RWPE1 (cell line): ENCODE measurements at regions of chr9 and their contacts with region 1.

Region 1: DNA sequence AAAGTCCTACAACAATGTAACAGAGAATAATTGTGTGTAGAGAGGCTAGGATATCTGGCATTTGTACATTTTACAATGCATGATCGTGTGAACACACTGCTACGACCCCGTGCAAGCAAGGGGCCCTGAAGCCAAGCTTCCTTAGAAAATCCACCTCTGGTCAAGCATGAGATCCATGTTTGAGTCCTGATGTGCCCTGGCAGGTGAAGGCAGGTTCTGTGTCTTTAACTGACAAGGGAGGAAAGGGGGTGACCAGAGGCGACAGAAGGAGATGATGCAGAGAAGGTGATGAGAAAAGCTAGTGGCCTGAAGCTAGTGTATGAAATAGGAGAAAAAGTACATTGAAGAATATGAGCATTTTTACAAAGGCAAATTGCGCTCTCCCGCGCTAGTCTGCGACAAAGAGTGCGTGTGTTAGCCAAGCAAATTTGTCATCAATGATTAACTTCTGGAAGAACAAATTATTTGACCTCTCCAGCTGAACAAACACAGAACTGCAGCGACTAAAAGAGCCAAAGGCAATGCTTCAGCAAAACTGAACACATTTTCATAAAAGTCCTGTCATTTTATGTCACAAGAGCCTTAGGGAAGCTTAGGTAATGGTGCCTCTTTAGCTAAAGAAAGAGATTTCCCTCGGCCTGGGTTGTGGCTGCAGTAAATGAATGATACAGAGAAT is 101.7 kb upstream of the DAPK1 start:
- DNase-seq: no peak
- H3K27ac ChIP-seq: no peak overlapping the region
- CTCF ChIP-seq: no peak

Region 2: DNA sequence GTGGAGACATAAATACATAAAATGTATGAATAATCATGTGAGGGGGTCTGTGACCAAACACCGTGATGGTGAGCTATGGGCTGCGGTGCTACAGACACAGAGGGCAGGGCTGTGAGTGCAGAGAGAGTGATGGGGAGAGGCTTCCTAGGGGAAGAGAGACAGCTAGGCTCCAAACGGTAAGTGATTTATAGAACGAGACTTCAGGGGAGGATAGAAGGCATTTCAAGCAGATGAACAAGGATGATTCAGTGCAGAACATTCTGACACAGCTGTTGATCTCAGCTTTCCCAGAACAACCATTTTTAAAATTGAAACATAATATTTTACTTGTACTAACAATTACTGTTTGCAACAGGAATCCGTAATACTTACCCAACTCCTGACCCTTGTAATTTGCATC is 549.3 kb before region 1 on chr9:
- CTCF ChIA-PET with region 1: interaction called, 15 read pairs
- POLR2A ChIA-PET with region 1: no interaction called
- DNase-seq: no peak
- H3K27ac ChIP-seq: no peak overlapping the region
- CTCF ChIP-seq: no peak

Region 3: DNA sequence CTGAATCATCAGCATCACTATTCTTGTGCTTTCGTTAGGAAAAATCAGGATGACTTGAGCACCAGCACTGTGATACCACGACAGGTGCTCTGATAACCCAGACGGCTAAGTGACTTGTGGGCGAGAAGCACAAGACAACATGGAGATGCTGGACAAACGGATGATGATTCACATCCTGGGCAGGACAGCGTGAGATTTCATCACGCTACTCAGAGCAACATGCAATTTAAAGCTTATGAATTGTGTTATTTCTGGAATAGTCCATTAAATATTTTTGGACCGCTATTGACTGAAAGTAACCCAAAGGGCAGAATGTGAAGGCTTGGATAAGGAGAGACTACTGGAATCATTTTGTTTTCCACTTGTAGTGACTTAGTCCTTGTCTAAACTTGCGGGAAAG is 13.0 kb before region 1 on chr9:
- CTCF ChIA-PET with region 1: no interaction called
- POLR2A ChIA-PET with region 1: no interaction called
- DNase-seq: peak; percentile 31
- H3K27ac ChIP-seq: peak overlapping the region; percentile 97
- CTCF ChIP-seq: no peak

Region 4: DNA sequence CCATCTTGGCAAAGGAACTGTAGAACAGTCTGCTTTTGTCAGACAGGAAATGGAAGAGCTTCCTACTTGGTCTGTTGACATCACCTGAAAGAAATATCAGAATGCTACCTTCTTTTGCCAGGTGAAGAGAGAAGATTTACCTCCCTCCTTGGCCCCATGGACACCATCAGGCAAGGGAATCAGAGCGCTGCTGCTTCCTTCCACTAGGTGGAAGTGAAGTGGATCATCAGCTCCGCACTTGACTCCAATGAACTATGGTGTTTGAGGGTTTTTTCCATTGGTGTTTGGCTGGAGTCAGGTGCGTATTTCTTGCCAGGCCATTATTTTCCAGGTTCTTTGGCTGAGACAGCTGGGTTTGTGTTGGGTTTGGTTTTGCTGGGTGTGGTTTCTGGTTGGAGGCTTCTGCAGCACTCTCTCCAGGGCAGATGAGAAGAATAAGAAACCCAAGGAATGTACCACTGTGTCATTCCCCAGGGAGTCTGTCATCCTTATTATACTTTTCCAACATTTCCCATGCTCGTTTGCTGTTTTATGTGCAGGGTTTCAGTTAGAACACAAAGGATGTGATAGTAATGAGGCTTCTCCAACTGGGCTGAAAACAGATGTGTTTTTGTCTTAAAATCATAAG is 499.2 kb after region 1 on chr9:
- CTCF ChIA-PET with region 1: no interaction called
- POLR2A ChIA-PET with region 1: no interaction called
- DNase-seq: no peak
- H3K27ac ChIP-seq: no peak overlapping the region
- CTCF ChIP-seq: no peak